Common myeloid progenitor, CD34-positive (primary cell): ENCODE measurements at regions of chr6 and their contacts with region 1.

Region 1: DNA sequence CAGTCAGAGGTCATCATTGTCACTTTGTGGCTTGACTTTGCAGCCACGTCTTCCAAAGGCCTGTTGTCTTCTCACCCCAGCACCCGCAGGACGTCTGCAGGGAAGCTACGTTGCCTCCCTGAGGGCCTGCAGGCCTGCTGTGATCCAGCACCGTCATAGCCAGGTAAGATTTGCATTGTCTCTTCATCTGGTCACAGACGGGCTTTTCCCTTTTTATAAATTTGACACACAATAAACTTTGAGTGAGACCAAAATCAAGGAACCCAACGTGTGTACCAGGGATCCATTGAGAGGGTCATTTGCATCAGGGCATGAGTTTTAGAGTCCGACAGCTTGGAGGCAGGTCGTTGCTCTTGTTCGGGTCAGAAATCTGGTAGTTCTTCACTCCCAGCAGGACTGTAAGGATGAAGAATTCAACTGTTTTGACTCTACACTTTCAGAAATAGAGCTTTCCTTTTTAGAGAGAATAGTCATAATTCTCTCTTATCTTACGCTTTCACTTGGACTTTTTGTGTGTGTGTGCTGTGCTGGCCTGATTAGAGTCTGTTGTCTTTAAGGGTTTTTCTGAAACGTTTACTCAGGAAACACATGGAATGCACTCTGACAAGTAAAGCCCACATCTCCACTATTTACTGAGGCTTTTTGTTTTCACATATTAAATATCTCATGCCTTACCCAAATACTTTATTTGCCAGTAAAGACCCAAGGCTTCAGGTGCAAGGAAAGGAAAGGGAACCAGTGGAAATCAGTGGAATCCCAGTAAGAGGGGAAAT is 177.2 kb upstream of the TAB2 start:
- DNase-seq: peak; percentile 83 to 98 (median 94)
- H3K4me3 ChIP-seq: peak overlapping the region in 5 of 7 experiments; percentile 12 to 61 (median 28)
- H3K27ac ChIP-seq: peak overlapping the region; percentile 82 to 89
- H3K4me1 ChIP-seq: peaks cover 11 to 49% (median 25%) of the 10 kb centered on the region in 4 experiments
- H3K27me3 ChIP-seq: no peaks in the 10 kb centered on the region

Region 2: DNA sequence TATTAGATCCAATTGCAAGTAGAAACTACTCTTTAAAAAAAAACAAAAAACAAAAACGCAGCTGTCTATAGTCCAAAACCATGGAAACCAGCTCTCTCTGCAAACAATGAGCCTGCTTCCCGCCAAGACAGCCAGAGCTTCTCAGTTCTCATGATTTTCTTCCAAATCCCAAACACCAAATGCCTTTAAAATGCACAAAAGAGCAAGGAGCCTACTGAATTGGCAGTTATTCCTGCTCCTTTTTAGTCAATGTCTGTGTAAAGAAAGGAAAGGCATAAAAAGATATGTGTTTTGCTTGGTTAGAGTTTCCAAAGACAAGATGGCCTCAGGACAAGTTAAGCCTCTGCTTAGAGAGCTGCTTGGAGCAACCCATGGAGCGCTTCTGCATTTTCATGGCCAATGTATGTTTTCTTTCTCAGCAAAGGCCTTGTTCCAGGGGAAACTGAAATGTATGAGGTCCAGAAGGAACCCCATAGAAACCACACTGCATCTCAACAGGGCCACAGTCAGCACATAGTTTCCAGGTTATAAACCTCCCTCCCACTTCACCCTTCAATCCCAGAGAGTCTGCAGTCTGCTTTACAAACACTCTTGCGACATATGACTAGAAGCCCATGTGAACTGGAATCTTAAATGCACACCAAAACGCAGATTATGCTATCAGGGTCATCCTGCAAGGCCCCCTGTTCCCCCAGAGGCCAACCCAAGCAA is 32.1 kb before region 1 on chr6:
- CTCF ChIA-PET with region 1: no interaction called
- POLR2A ChIA-PET with region 1: no interaction called
- DNase-seq: no peak
- H3K4me3 ChIP-seq: no peak overlapping the region
- H3K27ac ChIP-seq: no peak overlapping the region
- H3K4me1 ChIP-seq: peaks cover 0 to 3% (median 2%) of the 10 kb centered on the region in 4 experiments
- H3K27me3 ChIP-seq: no peaks in the 10 kb centered on the region

Region 3: DNA sequence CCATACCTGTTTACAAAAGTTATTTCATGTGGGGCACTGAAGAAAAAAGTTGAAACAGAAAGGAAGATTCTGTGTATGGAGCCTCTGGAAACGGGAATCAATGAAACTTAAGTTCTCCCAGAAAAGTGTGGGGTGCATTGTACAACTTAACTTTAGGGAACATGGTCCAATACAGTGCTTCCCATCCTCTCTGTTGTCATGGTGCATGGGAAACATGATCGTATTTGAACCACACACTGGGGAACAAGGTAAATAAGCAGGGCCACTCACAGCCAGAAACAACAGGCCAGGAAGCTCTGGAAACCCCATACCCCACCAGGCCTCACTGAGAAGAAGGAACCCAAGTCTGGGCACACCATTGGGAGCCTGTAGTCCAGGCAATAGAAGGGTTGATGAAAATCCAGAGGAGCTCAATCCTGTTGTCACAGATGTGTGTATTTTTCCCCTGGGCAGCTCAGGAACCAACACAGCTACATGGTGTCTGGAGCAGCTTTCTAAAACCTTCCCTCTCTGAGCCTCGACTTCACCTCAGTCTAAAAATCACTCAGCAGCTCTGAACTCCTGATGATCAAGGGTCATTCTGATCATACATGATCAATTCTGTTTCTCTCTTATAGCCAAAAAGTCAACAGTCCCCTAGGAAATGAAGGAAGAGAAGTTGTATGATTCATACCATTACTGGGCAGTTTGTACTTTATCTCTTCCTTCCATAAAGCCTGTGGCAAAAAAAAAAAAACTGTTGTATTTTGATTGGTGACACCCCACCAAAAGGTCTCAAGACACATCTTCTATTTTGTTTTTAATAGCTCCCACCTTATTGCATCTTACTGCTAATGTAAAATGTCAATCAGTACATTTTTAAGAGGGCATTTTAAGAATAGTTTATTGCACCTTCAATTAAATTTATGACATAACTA is 21.3 kb before region 1 on chr6:
- CTCF ChIA-PET with region 1: interaction called, 9 read pairs
- POLR2A ChIA-PET with region 1: interaction called, 16 read pairs
- DNase-seq: peak; percentile 73 to 92 (median 85)
- H3K4me3 ChIP-seq: peak overlapping the region in 1 of 7 experiments; percentile 29
- H3K27ac ChIP-seq: peak overlapping the region; percentile 86 to 95
- H3K4me1 ChIP-seq: peaks cover 17 to 66% (median 34%) of the 10 kb centered on the region in 4 experiments
- H3K27me3 ChIP-seq: no peaks in the 10 kb centered on the region